Activated CD8-positive, alpha-beta T cell treated with anti-CD3 and anti-CD28 coated beads, Interleukin-2, amount 10 ng/mL, durations not matched to agents 7 days and 5 days (primary cell): ENCODE measurements at regions of chr3 and their contacts with region 1.

Region 1: DNA sequence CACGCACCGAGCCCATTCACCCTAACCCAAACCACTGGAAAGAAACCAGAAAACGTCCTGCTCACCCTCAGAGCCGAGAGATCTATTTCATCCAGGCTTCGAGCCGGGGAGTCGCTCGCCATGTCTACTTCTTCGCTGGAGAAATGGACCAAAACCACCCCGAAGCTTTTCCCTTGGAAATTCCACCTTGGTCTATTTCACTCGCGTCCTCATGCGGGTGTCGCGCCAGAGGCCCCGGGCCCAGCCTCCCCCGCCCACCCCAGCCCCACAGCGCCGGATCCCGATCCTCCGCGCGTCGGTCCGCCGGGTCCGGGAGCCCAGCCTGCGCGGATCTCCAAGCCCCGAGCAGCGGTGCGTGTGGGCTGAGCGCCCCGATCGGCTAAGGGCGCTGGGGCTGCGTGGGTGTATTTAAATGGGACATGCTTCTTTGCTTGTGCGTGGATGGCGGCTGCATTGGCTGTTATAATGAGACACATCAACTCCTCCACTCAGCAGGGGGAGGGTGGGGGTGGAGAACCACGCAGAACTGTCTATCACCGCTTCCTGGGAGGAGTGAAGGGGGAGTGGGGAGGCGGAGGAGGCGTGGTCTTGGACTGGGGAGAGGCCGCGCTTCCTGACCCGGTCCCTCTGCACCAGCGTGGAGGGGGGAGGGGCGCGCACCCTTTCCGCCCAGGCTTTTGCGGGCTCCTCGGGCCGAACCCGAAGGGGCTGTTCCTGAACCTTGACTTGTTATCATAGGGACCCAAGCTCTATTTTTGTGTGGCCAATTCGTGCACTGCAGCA is at the start of gene TNIK:
- DNase-seq: peak; percentile 96
- ATAC-seq: peak; percentile 84
- H3K4me3 Mint-ChIP-seq: peak within 1 kb of the TSS; percentile 84
- H3K27ac Mint-ChIP-seq: peak within 1 kb of the TSS; percentile 84
- H3K4me1 Mint-ChIP-seq: peaks cover 39% of the 10 kb centered on the region
- H3K27me3 Mint-ChIP-seq: no peaks in the 10 kb centered on the region
- total RNA-seq, gene TNIK: 32.1 to 39.2 TPM

Region 2: DNA sequence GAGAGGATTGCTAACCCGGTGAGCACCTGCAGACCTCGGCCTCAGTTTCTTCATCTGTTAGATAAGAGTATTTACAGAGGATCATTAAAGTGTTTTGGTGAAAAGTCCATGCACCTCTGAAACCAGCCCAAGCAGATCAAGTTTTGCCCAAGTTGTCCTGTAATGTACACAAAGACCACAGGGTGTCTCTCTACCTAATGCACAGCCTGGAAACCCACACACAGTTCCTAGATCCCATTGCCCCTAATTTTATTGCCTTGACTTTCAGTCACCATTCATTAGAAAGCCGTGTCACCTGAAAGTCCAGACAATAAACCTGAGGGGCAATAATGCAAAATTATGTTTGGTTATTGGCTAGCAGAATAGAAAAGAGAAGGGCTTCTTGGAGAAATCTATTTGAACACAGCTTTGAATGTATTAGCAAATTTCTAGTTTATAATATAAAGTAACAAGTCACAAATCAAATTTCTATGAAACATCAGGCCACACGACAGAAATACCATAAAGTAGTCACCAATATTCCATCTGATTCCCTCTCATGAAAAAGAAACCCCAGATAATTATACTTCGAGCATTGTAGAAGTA is 272.3 kb before region 1 on chr3:
- CTCF ChIA-PET with region 1: interaction called, 10 read pairs
- POLR2A ChIA-PET with region 1: interaction called, 3 read pairs
- DNase-seq: peak; percentile 28
- ATAC-seq: no peak
- H3K4me3 Mint-ChIP-seq: no peak overlapping the region
- H3K27ac Mint-ChIP-seq: no peak overlapping the region
- H3K4me1 Mint-ChIP-seq: peaks cover 16% of the 10 kb centered on the region
- H3K27me3 Mint-ChIP-seq: no peaks in the 10 kb centered on the region

Region 3: GRCh38 chr3:171328419-171329082 is 131.6 kb before region 1 on chr3:
- CTCF ChIA-PET with region 1: interaction called, 12 read pairs
- POLR2A ChIA-PET with region 1: interaction called, 4 read pairs
- DNase-seq: peak; percentile 80
- ATAC-seq: peak; percentile 91
- H3K4me3 Mint-ChIP-seq: peak overlapping the region; percentile 1
- H3K27ac Mint-ChIP-seq: peak overlapping the region; percentile 60
- H3K4me1 Mint-ChIP-seq: peaks cover 22% of the 10 kb centered on the region
- H3K27me3 Mint-ChIP-seq: no peaks in the 10 kb centered on the region

Region 4: GRCh38 chr3:171436380-171436779 is 23.8 kb before region 1 on chr3:
- CTCF ChIA-PET with region 1: no interaction called
- POLR2A ChIA-PET with region 1: no interaction called
- DNase-seq: no peak
- ATAC-seq: no peak
- H3K4me3 Mint-ChIP-seq: no peak overlapping the region
- H3K27ac Mint-ChIP-seq: no peak overlapping the region
- H3K4me1 Mint-ChIP-seq: peaks cover 12% of the 10 kb centered on the region
- H3K27me3 Mint-ChIP-seq: no peaks in the 10 kb centered on the region

Region 5: DNA sequence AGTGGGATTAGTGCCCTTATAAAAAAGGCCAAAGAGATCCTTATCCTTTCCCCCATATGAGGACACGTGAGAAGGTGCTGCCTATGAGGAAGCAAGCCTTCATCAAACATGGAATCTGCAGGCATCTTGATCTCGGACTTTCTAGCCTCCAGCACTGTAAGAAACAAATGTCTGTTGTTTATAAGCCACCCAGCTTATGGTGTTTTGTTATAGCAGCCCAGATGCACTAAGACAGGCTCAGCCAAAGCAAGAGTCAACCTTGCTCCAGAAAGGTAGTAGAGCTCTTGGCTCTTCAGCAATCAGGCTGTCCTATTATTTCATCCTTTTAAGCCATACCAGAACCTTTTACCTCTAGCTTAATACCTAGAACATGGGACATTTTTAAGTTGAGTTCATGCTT is 12.4 kb after region 1 on chr3:
- CTCF ChIA-PET with region 1: interaction called, 10 read pairs
- POLR2A ChIA-PET with region 1: interaction called, 3 read pairs
- DNase-seq: no peak
- ATAC-seq: no peak
- H3K4me3 Mint-ChIP-seq: no peak overlapping the region
- H3K27ac Mint-ChIP-seq: no peak overlapping the region
- H3K4me1 Mint-ChIP-seq: no peaks in the 10 kb centered on the region
- H3K27me3 Mint-ChIP-seq: peaks cover 2% of the 10 kb centered on the region

Region 6: DNA sequence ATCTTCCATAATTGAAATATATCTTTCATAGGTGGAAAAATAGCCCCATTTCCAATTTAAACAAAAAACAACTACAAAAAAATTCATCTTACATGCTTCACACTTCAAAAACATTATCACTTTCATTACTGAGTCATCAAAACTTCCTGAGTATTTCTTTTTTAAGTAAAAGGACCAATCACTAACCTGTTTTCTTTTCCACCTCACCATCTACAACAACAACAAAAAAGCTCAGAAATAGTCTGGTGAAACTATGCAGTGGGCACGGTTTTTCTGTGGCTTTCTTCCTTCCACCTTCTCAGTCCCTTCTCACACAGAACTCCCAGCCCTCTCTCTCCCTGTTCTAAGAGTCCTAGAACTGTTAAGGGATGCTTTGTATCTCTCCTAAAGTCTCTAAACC is 20.4 kb after region 1 on chr3:
- CTCF ChIA-PET with region 1: interaction called, 14 read pairs
- POLR2A ChIA-PET with region 1: interaction called, 5 read pairs
- DNase-seq: peak; percentile 34
- ATAC-seq: peak; percentile 72
- H3K4me3 Mint-ChIP-seq: no peak overlapping the region
- H3K27ac Mint-ChIP-seq: peak overlapping the region; percentile 27
- H3K4me1 Mint-ChIP-seq: peaks cover 20% of the 10 kb centered on the region
- H3K27me3 Mint-ChIP-seq: no peaks in the 10 kb centered on the region

Region 7: DNA sequence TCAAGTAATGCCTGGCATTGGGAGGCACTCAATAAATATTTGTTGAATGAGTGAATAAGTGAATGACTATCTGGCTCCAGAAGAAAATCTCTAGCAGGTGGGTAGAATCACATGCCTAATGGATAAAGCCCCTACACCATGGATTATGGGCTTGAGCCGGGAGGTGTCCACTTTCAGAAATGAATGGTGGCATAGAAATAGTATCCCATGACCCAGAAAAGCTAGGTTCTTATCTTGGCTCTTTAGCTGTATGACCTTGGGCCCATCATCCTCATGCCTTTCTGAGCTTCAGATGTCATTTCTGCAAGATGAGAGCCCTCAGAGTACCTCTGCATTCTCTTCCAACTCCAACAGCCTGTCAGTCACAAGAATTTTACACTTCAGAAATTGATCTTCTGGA is 37.3 kb after region 1 on chr3:
- CTCF ChIA-PET with region 1: no interaction called
- POLR2A ChIA-PET with region 1: no interaction called
- DNase-seq: no peak
- ATAC-seq: no peak
- H3K4me3 Mint-ChIP-seq: no peak overlapping the region
- H3K27ac Mint-ChIP-seq: no peak overlapping the region
- H3K4me1 Mint-ChIP-seq: peaks cover 39% of the 10 kb centered on the region
- H3K27me3 Mint-ChIP-seq: no peaks in the 10 kb centered on the region